Endothelial cell of umbilical vein (primary cell): ENCODE measurements at regions of chr6 and their contacts with region 1.

Region 1: DNA sequence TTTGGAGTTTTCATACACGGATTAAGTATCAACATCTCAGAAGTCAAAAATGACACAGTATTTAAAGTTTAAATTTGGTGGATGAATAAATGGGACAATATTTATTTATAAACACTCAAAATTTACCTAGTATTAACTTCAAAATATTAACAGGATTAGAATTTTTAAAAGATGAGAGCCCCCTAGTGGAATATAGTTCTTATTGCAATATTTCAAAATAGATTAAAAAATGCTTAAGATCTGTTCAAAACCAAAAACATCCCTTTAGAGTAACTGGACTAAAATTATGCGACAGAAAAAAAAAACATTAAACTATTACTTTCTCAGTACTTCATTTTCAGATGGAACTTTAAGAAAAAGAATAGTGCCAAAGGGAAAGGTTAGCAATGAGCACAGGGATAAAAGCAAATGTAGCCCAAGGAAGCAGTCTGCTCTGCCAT is 56.6 kb downstream of the SNX14 start:
- DNase-seq: peak; percentile 32
- H3K4me3 ChIP-seq: no peak overlapping the region
- H3K27ac ChIP-seq: no peak overlapping the region
- H3K4me1 ChIP-seq: no peaks in the 10 kb centered on the region
- H3K27me3 ChIP-seq: no peaks in the 10 kb centered on the region
- CTCF ChIP-seq: peak in 1 of 2 donors; percentile 34
- POLR2A ChIP-seq: no peak

Region 2: GRCh38 chr6:85111481-85112011 is 425.5 kb before region 1 on chr6:
- CTCF ChIA-PET with region 1: no interaction called
- POLR2A ChIA-PET with region 1: no interaction called
- dilution Hi-C with region 1: no loop called
- intact Hi-C with region 1: no loop called
- DNase-seq: no peak
- H3K4me3 ChIP-seq: no peak overlapping the region
- H3K27ac ChIP-seq: no peak overlapping the region
- H3K4me1 ChIP-seq: no peaks in the 10 kb centered on the region
- H3K27me3 ChIP-seq: peaks cover 0 to 2% of the 10 kb centered on the region in 2 experiments
- CTCF ChIP-seq: no peak
- POLR2A ChIP-seq: no peak

Region 3: DNA sequence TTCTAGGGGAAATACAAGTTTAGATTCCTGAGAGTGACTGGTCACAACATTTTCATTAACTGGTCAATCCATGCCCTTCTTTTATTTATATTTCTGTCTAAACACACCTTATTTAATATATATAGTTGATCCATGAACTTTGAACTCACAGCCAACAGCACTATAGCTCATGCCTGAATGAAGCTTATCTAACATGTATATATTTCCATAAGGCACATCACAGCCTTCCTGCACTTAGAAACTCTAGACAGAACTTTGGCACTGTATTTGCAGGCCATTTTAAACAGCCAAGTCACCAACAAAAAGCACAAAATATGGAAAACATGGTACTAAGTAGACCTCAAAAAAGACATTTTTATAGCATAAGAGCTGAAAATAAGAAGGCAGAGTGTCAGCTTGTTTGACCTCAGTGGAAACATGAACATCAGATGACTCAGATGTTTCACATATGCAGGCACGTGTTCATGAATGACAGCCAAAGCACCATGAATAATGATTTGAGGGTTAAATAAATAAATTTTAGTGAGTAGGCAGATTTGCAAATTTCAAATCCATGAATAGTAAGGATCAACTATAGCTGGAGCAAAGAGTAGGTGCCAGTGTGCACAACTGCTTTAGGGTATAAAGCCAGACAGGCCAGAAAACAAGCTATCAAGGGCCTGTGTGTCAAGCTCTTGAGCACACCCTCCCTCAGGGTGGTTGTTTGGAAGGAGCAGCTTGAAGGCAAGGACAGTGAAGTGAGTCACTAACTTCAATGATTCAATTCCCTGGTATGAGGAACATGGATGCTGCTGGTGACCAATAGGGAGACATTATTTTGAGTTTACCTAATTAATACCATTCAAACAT is 176.1 kb before region 1 on chr6:
- CTCF ChIA-PET with region 1: interaction called, 49 read pairs
- POLR2A ChIA-PET with region 1: no interaction called
- dilution Hi-C with region 1: no loop called
- intact Hi-C with region 1: no loop called
- DNase-seq: peak; percentile 70
- H3K4me3 ChIP-seq: no peak overlapping the region
- H3K27ac ChIP-seq: peak overlapping the region; percentile 70
- H3K4me1 ChIP-seq: peaks cover 30% of the 10 kb centered on the region
- H3K27me3 ChIP-seq: no peaks in the 10 kb centered on the region
- CTCF ChIP-seq: no peak
- POLR2A ChIP-seq: no peak